ENCODE measurements at regions of chr22 and their contacts with region 1.

Region 1: DNA sequence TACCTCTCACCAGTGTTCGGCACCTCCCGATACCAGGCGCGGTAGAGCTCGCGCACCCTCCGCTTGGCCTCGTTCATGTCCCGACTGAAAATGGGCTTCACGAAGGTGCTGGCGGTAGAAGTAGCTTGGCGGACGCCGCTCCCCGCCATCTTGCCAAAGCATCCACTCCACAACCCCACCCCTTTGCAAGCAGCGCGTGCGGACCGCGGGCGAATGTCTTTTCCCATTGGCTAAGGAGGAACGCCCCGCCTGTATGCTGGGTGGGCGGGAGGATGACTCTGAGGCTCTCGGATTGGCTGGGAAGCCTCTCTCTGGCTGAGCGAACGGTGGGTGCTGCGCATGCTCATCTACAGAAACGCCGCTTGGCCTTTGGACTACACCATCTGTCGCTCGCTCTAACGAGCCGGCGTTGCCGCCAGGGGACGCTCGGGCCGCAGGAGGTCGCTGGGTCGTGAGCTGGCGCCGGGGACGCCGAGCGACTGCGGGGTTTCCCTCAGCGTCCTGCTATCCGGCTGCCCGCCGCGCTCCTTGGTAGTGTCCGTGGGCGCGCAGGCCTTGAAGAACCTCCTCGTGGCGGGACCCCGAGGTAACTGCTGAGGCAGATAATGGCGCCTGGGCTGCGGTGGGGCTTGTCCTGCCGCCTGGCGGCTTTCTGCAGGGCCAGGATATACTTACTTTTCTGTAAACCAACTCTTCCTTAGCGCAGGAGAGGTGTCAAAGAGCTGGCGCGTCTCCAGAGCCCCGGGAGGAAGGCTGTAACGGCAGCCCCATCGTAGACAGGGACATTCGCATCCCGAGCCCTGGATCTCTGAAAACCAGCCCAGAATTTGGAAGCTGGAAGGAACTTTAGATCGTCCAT is at the start of gene NDUFA6:
- DNase-seq: peak; percentile 92
- H3K4me3 ChIP-seq: peak within 1 kb of the TSS; percentile 97
- CTCF ChIP-seq: peak; percentile 95

Region 2: DNA sequence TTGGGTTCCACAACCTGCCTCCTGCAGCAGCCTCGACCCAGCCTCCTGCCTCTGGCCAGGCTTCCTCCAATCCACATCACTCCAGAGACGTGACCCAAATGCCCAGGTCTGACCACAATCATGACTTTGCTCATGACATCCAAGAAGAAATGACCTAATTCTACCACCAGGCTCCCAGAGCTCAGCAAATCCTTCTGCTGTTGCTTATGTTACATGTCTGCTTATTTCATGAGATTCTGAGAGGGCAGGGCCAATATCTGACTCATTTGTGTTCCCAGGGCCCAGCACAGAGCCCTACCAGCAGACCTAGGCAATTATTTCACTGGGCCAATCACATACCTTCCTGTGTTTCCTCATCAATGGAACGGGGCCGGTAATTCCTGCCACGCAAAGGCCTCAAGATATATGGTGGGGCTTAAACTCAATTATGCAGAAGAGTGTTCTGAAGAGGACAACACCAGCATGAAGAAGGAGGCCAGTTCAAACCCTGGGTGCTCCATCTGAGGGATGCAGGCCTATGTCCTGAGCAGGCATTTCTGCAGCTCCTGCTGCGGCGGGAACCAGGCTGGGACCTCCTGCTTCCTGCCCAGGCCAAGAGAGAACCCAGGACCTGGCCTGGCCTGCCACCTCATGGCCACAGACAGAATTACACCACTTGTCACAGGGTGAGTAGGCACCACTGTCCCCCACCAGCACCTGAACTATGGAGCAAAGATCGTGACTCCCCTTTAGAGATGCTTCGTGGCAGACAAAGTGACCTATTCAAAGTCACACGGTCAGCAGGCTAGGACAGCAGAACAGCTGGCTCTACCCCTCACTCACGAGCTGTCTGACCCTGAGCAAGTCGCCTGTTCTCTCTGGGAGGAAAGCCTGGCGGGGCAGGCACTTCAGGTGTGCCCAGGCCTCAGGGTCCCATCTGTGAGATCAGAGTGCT is 149.7 kb before region 1 on chr22:
- CTCF ChIA-PET with region 1: no interaction called
- POLR2A ChIA-PET with region 1: no interaction called
- DNase-seq: peak; percentile 52
- H3K4me3 ChIP-seq: no peak overlapping the region
- CTCF ChIP-seq: peak; percentile 93

Region 3: GRCh38 chr22:41966607-41967240 is 124.1 kb before region 1 on chr22:
- CTCF ChIA-PET with region 1: interaction called, 42 read pairs
- POLR2A ChIA-PET with region 1: no interaction called
- DNase-seq: peak; percentile 63
- H3K4me3 ChIP-seq: no peak overlapping the region
- CTCF ChIP-seq: no peak

Region 4: GRCh38 chr22:42079319-42080251 is 11.2 kb before region 1 on chr22 and contains the start of gene SMDT1:
- CTCF ChIA-PET with region 1: interaction called, 44 read pairs
- POLR2A ChIA-PET with region 1: interaction called, 10 read pairs
- DNase-seq: peak; percentile 83
- H3K4me3 ChIP-seq: peak within 1 kb of the TSS; percentile 89
- CTCF ChIP-seq: no peak

Region 5: DNA sequence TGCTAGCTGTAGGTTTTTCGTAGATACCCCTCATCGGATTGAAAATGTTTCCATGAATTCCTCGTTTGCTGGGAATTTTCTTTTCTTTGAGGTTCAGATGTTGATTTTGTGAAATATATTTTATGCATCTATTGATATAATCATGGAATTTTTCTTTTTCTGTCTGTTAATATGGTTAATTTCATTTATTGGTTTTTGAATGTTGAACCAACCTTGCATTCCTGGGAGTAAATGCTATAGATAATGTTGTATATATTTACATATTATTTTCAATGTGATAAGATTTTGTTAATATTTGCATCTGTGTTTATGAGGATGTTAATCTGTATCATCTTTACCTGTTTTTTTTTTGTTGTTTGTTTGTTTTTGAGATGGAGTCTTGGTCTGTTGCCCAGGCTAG is 10.4 kb after region 1 on chr22:
- CTCF ChIA-PET with region 1: interaction called, 17 read pairs
- POLR2A ChIA-PET with region 1: no interaction called
- DNase-seq: no peak
- H3K4me3 ChIP-seq: no peak overlapping the region
- CTCF ChIP-seq: no peak

Region 6: GRCh38 chr22:42111798-42112197 is 21.0 kb after region 1 on chr22:
- CTCF ChIA-PET with region 1: interaction called, 33 read pairs
- POLR2A ChIA-PET with region 1: no interaction called
- DNase-seq: no peak
- H3K4me3 ChIP-seq: no peak overlapping the region
- CTCF ChIP-seq: no peak

Region 7: DNA sequence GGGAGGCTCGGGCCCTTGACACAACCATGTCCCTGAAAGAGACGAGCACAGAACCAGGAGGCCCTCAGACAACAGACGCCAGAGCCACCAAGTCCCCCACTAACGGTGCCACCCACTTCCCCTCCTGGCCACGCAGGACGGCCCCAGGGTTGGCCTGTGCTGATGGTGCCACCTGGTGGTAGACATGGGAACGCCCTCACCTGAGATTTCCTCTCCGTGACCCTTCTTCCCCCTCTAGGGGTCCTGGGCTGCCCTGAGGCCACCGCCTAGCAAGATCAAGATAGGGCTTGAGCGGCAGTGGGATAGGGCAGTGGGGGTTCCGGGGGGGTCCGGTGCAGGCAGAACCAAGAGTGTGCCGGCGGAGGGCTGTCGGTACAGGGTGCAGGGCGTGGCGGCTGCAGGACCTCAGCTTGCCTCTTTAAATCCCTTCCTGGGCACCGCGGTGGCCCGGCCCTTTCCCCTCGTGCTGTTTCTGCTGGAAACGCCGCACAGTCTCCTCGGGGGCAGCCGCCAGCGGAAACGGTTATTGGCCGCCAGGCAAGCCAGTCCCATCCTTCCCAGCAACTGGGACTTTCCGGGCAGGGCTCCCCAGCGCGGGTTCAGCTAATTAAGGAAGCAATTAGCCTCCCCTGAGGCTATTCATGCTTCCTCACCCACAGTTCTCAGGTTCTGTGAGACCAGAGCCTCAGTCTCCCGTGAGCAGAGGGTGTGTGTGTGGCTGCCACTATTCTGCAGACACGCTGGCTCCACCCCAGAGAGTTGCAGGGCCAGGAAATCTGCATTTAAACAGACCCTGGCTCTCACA is 346.9 kb after region 1 on chr22:
- CTCF ChIA-PET with region 1: interaction called, 177 read pairs
- POLR2A ChIA-PET with region 1: no interaction called
- DNase-seq: no peak
- H3K4me3 ChIP-seq: peak overlapping the region; percentile 60
- CTCF ChIP-seq: peak; percentile 94

Region 8: DNA sequence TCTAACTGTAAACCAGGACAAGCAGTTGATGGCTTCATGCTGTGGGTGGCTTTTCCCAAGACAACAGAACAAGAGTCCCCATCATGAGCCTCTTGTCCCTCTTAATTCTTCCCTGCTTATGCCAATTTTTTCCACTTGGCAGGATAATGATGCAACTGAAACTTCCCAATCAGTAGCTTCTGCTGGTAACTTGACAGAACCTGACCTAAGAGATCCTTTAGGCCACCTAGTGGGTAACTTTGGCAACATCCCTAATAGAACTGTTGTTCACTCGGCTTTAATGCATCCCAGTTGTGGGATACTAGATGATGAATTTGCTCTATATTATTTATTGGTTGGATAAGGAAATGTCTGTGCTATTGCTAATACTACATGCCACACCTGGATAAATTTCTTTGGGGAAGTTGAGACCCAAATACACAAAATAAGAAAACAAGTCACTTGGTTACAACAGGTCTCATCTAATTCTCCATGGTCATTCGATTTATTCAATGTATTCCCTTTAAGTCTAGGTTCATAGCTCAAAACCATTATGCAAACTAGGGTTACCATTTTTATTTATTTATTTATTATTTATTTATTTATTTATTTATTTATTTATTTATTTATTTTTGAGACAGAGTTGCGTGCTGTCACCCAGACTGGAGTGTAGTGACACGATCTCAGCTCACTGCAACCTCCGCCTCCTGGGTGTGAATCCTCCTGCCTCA is 382.8 kb after region 1 on chr22:
- CTCF ChIA-PET with region 1: interaction called, 45 read pairs
- POLR2A ChIA-PET with region 1: no interaction called
- DNase-seq: no peak
- H3K4me3 ChIP-seq: no peak overlapping the region
- CTCF ChIP-seq: peak; percentile 62

Measured in AG04449 (cell line).